HEK293 (cell line): ENCODE measurements at regions of chr11 and their contacts with region 1.

Region 1: GRCh38 chr11:102914238-102915043 is 39.7 kb upstream of the MMP12 start:
- H3K4me3 ChIP-seq: no peak overlapping the region
- H3K27ac ChIP-seq: no peak overlapping the region
- H3K4me1 ChIP-seq: no peaks in the 10 kb centered on the region
- CTCF ChIP-seq: 0 out of 2 replicates have a peak, but pooled peaks have one; percentile 10

Region 2: DNA sequence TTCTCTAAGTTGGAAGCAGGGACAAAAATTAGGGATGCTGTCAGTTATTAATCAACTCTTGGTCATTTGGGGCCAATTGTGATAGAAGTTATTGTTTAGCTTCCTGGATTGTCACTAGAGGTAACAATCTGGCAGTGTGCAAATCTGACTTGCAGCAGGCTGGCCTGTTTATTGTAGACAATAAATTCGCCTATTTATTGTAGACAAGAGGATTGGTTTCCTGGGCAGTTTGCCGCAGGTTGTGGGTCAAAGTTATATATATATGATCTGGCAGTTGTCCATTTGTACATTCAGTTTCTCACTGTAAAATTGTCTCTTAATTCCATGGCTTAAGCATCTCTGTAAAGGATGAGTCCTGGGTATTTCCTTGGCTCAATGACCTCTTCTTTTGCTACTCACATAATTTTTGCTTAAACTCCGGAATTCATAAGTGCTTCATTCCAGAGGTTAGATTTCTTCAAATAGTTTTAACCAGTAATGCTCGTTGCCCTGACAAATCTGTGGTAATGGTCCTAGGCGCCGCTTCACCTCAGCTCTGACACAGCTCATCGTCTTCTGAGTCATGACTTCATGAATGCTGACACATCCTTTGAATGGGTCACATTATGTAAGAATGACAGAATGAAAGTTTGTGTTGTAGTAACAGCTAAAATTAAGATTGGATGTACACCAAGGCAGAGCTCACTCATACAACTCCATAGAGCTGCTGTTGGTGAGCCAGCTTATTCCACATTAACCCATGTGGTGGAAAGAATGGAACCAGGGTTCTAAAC is 63.3 kb before region 1 on chr11:
- CTCF ChIA-PET with region 1: no interaction called
- POLR2A ChIA-PET with region 1: no interaction called
- H3K4me3 ChIP-seq: no peak overlapping the region
- H3K27ac ChIP-seq: no peak overlapping the region
- H3K4me1 ChIP-seq: no peaks in the 10 kb centered on the region
- CTCF ChIP-seq: no peak

Region 3: GRCh38 chr11:102927624-102927990 is 13.2 kb after region 1 on chr11:
- CTCF ChIA-PET with region 1: interaction called, 14 read pairs
- POLR2A ChIA-PET with region 1: no interaction called
- H3K4me3 ChIP-seq: no peak overlapping the region
- H3K27ac ChIP-seq: no peak overlapping the region
- H3K4me1 ChIP-seq: no peaks in the 10 kb centered on the region
- CTCF ChIP-seq: no peak

Region 4: DNA sequence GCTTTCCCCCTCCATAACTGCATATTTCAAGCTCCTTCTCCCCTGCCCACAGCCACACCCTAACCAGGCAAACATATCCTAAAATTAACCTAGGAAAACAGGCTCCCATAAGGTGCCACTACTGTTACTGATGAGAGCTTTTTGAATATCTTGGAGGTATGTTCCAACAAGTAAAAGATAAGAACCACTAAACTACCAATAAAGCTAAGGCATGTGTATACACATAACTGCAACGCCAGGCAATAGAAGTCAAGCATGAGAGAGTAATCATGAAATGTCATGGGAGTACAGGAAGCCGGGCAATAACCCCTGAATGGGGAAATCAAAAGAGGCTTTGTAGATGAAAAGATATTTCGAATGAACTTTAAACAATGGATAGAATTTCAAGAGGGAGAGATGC is 31.8 kb after region 1 on chr11:
- CTCF ChIA-PET with region 1: interaction called, 16 read pairs
- POLR2A ChIA-PET with region 1: no interaction called
- H3K4me3 ChIP-seq: no peak overlapping the region
- H3K27ac ChIP-seq: no peak overlapping the region
- H3K4me1 ChIP-seq: no peaks in the 10 kb centered on the region
- CTCF ChIP-seq: no peak